ENCODE measurements at regions of chr6 and their contacts with region 1.

Region 1: GRCh38 chr6:31087494-31088089 is 24.8 kb downstream of the C6orf15 start:
- DNase-seq: peak; percentile 75
- H3K4me3 Mint-ChIP-seq: no peak overlapping the region
- H3K27ac Mint-ChIP-seq: no peak overlapping the region
- H3K4me1 Mint-ChIP-seq: peaks cover 10% of the 10 kb centered on the region
- H3K27me3 Mint-ChIP-seq: peaks cover 22% of the 10 kb centered on the region

Region 2: DNA sequence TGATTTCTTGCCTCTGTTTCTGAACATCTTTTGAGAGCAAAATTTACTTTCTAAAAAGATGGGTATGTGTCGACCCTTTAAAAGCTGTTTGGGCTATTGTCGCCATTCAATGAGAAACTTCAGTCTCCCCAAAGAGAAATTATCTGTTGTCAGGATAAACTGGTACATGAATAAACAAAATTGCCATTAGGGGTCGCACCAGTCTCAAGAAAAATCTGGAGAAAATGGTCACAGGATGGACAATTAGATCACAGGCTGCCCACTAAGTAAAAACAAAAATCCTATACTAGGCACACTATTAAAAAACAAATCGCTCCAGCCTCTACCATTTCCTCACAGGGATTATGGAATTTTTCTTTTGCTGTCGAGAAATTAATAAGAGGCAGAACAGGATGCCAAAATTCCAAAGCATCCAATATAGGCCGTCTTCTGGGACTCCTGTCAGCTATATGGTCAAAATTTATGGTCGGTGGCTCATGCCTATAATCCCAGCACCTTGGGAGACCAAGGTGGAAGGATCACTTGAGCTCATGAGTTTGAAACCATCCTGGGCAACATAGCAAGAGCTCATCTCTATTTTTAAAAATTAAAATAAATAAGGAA is 603.8 kb before region 1 on chr6:
- intact Hi-C with region 1: loop called (anchors 5 kb)
- DNase-seq: no peak
- H3K4me3 Mint-ChIP-seq: no peak overlapping the region
- H3K27ac Mint-ChIP-seq: no peak overlapping the region
- H3K4me1 Mint-ChIP-seq: peaks cover 44% of the 10 kb centered on the region
- H3K27me3 Mint-ChIP-seq: peaks cover 40% of the 10 kb centered on the region

Region 3: DNA sequence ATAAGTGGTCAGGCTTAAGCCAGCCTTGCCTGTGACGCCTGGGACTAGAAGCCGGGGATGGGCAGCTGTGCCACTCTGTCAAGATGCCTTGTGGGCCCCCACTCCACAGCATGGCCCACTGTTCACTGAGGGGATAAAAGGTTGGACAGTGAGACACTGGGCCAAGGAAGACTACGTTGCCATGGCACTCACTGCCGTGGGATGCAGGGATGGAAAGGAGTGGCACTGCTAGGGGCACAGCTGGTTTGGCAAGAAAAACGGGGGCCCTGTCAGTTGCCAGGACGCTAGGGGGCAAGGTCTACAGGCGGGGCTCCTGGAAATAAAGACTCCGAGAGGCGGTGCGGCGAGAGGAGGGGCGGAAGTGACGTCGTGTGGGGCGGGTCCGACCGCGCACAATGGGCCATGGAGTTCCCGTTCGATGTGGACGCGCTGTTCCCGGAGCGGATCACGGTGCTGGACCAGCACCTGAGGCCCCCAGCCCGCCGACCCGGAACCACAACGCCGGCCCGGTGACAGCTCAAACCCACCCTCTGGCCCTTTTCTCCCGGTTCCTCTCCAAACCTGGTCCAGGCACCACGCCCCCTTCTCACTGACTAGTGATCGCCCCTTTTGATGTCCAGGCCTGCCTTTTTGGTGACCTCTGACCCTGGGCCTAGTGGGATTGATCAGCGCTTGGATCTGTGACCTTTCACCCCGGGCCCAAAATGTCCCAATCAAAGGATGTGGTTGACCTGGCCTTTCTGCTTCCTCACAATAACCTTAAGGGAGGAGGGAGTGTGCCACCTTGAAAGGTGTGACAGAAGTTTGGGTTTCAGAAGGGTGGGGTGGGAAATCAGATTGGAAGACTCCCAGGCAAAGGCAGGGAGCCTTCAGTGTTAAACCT is 460.9 kb before region 1 on chr6 and contains the start of gene ATAT1:
- intact Hi-C with region 1: loop called (anchors 1 kb)
- DNase-seq: peak; percentile 84
- H3K4me3 Mint-ChIP-seq: peak within 1 kb of the TSS; percentile 91
- H3K27ac Mint-ChIP-seq: peak within 1 kb of the TSS; percentile 95
- H3K4me1 Mint-ChIP-seq: peaks cover 27% of the 10 kb centered on the region
- H3K27me3 Mint-ChIP-seq: no peaks in the 10 kb centered on the region
- total RNA-seq, gene ATAT1: 11.6 and 13.4 TPM in 2 replicates

Region 4: GRCh38 chr6:30730601-30731435 is 356.8 kb before region 1 on chr6:
- intact Hi-C with region 1: loop called (anchors 5 kb)
- DNase-seq: peak; percentile 79
- H3K4me3 Mint-ChIP-seq: peak overlapping the region; percentile 19
- H3K27ac Mint-ChIP-seq: peak overlapping the region; percentile 55
- H3K4me1 Mint-ChIP-seq: peaks cover 51% of the 10 kb centered on the region
- H3K27me3 Mint-ChIP-seq: no peaks in the 10 kb centered on the region

Region 5: GRCh38 chr6:30883685-30884520 is 203.7 kb before region 1 on chr6 and contains the start of gene DDR1:
- intact Hi-C with region 1: loop called (anchors 1 kb)
- DNase-seq: no peak
- H3K4me3 Mint-ChIP-seq: peak within 1 kb of the TSS; percentile 77
- H3K27ac Mint-ChIP-seq: peak within 1 kb of the TSS; percentile 65
- H3K4me1 Mint-ChIP-seq: peaks cover 45% of the 10 kb centered on the region
- H3K27me3 Mint-ChIP-seq: peaks cover 3% of the 10 kb centered on the region
- total RNA-seq, gene DDR1: 21.4 and 24.8 TPM in 2 replicates

Region 6: DNA sequence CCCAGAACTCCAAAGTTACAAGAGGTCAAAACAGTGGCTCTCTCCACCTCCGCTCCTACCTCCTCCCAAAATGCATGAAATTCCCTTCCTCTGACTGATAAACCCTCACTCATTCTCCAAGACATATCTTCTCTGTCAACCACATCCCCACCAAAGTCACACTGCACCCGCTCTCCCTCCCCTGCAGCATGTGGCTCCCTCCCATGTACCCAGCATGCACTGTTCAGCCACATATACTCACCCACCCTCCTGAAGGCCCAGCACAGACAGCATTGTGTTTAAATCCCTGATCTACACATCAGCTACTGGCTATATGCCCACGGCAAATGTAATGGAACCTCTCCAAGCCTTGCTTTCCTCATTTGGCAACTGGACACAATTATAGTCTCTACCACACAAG is 88.4 kb after region 1 on chr6:
- intact Hi-C with region 1: no loop called
- DNase-seq: no peak
- H3K4me3 Mint-ChIP-seq: no peak overlapping the region
- H3K27ac Mint-ChIP-seq: no peak overlapping the region
- H3K4me1 Mint-ChIP-seq: peaks cover 13% of the 10 kb centered on the region
- H3K27me3 Mint-ChIP-seq: no peaks in the 10 kb centered on the region